PC-3 (cell line): ENCODE measurements at regions of chr14 and their contacts with region 1.

Region 1: DNA sequence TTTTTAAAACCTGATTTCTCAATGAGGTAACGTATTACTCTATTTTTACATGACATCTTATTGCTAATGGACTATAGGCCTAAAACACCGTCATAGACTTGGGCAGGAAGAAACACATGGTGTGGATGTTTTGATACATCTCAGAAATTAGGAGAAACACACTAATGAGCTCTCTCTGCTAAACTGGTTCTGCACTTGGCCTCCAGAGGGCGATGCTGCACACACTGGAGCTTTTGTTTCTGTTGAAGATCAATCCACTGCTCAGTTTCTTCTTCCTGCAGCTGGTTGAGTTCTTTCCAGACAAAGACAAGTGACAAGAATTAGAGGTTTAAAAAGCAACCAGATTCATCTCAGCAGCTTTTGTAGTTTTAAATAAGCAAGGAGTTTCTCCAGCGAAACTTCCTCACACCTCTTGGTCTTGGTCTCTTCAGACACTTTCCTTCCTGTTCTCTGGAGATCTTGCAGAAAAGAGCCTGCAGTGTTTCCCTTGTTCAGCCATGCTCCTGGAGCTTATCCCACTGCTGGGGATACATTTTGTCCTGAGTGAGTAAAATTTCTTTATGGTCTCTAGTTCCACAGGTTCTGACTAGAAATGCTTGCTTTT is 178.5 kb upstream of the OR4E1 start:
- DNase-seq: peak; percentile 51
- ATAC-seq: no peak
- H3K4me3 ChIP-seq: no peak overlapping the region
- H3K27ac ChIP-seq: no peak overlapping the region
- H3K4me1 ChIP-seq: no peaks in the 10 kb centered on the region
- H3K27me3 ChIP-seq: peaks cover 37% of the 10 kb centered on the region
- CTCF ChIP-seq: peak; percentile 78

Region 2: DNA sequence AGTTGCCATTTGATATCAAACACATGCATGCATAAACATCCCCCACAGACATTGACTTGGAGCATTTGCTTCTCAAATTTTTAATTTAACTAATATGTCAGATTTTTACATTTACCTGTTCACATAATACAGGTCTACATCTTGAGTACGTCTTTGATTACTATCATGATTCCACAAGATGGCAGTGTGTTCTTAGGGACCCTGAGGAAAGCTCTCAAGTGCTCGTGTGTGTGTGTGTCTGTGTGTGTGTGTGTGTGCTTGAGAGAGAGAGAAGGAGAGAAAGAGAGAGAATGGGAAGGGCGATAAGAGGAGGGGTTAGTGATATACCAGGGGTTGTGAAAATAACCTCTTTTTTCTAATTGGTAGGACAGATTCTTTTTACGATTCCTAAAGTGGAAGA is 11.4 kb before region 1 on chr14:
- CTCF ChIA-PET with region 1: interaction called, 12 read pairs
- POLR2A ChIA-PET with region 1: no interaction called
- intact Hi-C with region 1: no loop called
- DNase-seq: peak; percentile 17
- ATAC-seq: no peak
- H3K4me3 ChIP-seq: no peak overlapping the region
- H3K27ac ChIP-seq: no peak overlapping the region
- H3K4me1 ChIP-seq: no peaks in the 10 kb centered on the region
- H3K27me3 ChIP-seq: peaks cover 30% of the 10 kb centered on the region
- CTCF ChIP-seq: peak; percentile 50; the same call in 1 of the 2 replicates